GM12878 (cell line): ENCODE measurements at regions of chr1 and their contacts with region 1.

Region 1: DNA sequence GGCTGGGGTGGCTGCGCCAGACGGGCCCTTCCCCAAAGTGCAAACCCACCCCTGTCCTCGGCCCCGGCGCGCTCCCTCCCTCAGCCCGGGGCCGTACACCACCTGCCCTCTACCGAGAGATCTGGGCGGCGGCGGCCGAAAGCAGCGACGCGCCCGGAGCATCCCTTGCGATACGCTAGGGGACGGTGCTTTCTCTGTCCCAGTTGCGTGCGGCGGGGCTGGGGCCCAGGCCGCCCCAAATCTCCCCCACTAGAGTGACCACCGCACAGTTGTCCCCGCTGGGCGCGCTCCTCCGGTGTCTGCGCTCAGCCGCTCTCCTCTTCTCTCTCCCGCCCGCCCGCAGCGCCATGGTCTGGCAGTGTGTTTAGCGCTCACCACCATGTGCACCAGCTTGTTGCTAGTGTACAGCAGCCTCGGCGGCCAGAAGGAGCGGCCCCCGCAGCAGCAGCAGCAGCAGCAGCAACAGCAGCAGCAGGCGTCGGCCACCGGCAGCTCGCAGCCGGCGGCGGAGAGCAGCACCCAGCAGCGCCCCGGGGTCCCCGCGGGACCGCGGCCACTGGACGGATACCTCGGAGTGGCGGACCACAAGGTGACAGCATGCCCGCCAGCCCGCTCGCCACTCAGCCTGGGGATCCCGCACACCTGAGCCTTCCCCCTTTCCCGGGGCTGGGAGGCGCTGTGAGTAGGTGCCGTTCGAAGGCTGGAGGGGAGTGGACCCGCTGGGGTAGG is 1.0 kb downstream of the ST6GALNAC5 start:
- DNase-seq: no peak
- ATAC-seq: peak; percentile 82
- H3K4me3 ChIP-seq: no peak overlapping the region
- H3K27ac ChIP-seq: no peak overlapping the region
- H3K4me1 ChIP-seq: peaks cover 11% of the 10 kb centered on the region; the same call in 1 of the 2 replicates
- H3K27me3 ChIP-seq: peaks cover 8 to 22% of the 10 kb centered on the region in 2 experiments
- CTCF ChIP-seq: peak in 2 of 3 experiments; percentile 3 to 14; a peak in 1 of 6 replicates
- EP300 ChIP-seq: no peak
- POLR2A ChIP-seq: no peak
- RAD21 ChIP-seq: 0 out of 2 replicates have a peak, but pooled peaks have one; percentile 15

Region 2: GRCh38 chr1:75672528-75673393 is 1195.6 kb before region 1 on chr1:
- CTCF ChIA-PET with region 1: no interaction called
- POLR2A ChIA-PET with region 1: no interaction called
- RAD21 ChIA-PET with region 1: no interaction called
- SMC1A ChIA-PET with region 1: no interaction called
- in situ Hi-C with region 1: no loop called
- intact Hi-C with region 1: no loop called
- DNase-seq: no peak
- ATAC-seq: no peak; the same call in 2 of the 3 replicates
- H3K4me3 ChIP-seq: no peak overlapping the region
- H3K27ac ChIP-seq: no peak overlapping the region
- H3K4me1 ChIP-seq: no peaks in the 10 kb centered on the region
- H3K27me3 ChIP-seq: no peaks in the 10 kb centered on the region
- CTCF ChIP-seq: no peak
- EP300 ChIP-seq: no peak
- POLR2A ChIP-seq: no peak
- RAD21 ChIP-seq: no peak

Region 3: DNA sequence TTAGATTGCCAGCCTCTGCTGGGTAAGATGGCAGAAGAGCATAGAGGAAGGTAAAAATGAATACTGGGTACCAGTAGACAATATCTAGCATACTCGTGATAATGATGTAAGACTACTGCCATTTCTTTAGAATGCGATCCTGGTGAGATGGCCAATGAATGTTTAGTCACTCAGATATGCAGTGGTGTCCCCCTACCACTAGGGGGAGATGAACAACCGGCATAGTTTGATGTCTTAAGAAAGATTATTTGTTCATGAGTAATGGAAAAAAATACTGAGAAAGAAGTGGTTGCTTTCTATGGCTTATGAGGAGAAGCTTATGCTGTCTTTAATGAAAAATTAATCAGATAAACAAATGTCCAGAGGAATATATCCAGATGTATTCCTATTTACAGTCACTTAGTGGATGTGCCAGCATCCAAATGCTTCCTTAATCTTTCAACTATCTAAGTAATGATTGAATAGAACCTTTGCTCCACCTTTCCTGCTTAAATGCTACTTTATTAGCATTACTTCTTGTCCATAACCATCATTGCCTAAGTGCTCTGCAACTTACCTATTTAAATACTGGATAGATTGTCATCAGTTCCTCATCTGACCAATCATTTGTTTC is 537.2 kb before region 1 on chr1:
- CTCF ChIA-PET with region 1: interaction called, 4 read pairs
- POLR2A ChIA-PET with region 1: no interaction called
- RAD21 ChIA-PET with region 1: interaction called, 3 read pairs
- SMC1A ChIA-PET with region 1: interaction called, 4 read pairs
- in situ Hi-C with region 1: no loop called
- intact Hi-C with region 1: loop called (anchors 10 kb)
- DNase-seq: no peak
- ATAC-seq: peak; percentile 90
- H3K4me3 ChIP-seq: no peak overlapping the region
- H3K27ac ChIP-seq: no peak overlapping the region
- H3K4me1 ChIP-seq: no peaks in the 10 kb centered on the region
- H3K27me3 ChIP-seq: no peaks in the 10 kb centered on the region
- CTCF ChIP-seq: peak; percentile 83 to 89 (median 89)
- EP300 ChIP-seq: no peak
- POLR2A ChIP-seq: no peak
- RAD21 ChIP-seq: peak; percentile 85

Region 4: GRCh38 chr1:76933872-76934815 is 65.8 kb after region 1 on chr1:
- CTCF ChIA-PET with region 1: interaction called, 7 read pairs
- POLR2A ChIA-PET with region 1: interaction called, 4 read pairs
- RAD21 ChIA-PET with region 1: interaction called, 41 read pairs
- SMC1A ChIA-PET with region 1: interaction called, 22 read pairs
- in situ Hi-C with region 1: no loop called
- intact Hi-C with region 1: no loop called
- DNase-seq: no peak
- ATAC-seq: peak; percentile 53
- H3K4me3 ChIP-seq: no peak overlapping the region
- H3K27ac ChIP-seq: no peak overlapping the region
- H3K4me1 ChIP-seq: peaks cover 1% of the 10 kb centered on the region; the same call in 1 of the 2 replicates
- H3K27me3 ChIP-seq: no peaks in the 10 kb centered on the region; a peak in 1 of 4 replicates
- CTCF ChIP-seq: no peak
- EP300 ChIP-seq: no peak
- POLR2A ChIP-seq: no peak
- RAD21 ChIP-seq: no peak

Region 5: DNA sequence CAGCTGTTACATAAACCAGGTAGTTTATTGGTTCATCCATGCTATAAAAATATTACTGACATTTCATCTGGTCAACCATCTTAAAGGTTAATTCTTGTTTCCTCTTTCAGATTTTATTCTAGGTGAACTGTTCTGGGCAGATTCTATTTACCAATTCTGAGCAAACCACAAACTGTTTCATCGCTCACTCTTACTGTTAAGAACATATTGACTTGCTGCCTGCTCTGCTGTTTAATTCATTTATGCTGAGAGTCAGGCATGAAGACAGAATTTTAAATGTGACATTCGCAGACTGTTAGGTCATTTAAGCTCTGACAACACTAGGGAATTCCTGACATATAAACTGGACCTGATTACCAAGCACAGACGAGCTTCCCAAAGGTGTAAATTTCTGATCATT is 252.6 kb after region 1 on chr1:
- CTCF ChIA-PET with region 1: interaction called, 3 read pairs
- POLR2A ChIA-PET with region 1: no interaction called
- RAD21 ChIA-PET with region 1: interaction called, 10 read pairs
- SMC1A ChIA-PET with region 1: no interaction called
- in situ Hi-C with region 1: no loop called
- intact Hi-C with region 1: no loop called
- DNase-seq: no peak
- ATAC-seq: no peak
- H3K4me3 ChIP-seq: no peak overlapping the region
- H3K27ac ChIP-seq: no peak overlapping the region
- H3K4me1 ChIP-seq: no peaks in the 10 kb centered on the region
- H3K27me3 ChIP-seq: no peaks in the 10 kb centered on the region
- CTCF ChIP-seq: no peak
- EP300 ChIP-seq: no peak
- POLR2A ChIP-seq: no peak
- RAD21 ChIP-seq: no peak

Region 6: GRCh38 chr1:77267035-77267434 is 398.7 kb after region 1 on chr1:
- CTCF ChIA-PET with region 1: no interaction called
- POLR2A ChIA-PET with region 1: no interaction called
- RAD21 ChIA-PET with region 1: no interaction called
- SMC1A ChIA-PET with region 1: no interaction called
- in situ Hi-C with region 1: no loop called
- intact Hi-C with region 1: no loop called
- DNase-seq: no peak
- ATAC-seq: no peak
- H3K4me3 ChIP-seq: no peak overlapping the region
- H3K27ac ChIP-seq: no peak overlapping the region
- H3K4me1 ChIP-seq: no peaks in the 10 kb centered on the region
- H3K27me3 ChIP-seq: no peaks in the 10 kb centered on the region
- CTCF ChIP-seq: no peak
- EP300 ChIP-seq: no peak
- POLR2A ChIP-seq: no peak
- RAD21 ChIP-seq: no peak